ENCODE measurements at regions of chr18 and their contacts with region 1.

Region 1: GRCh38 chr18:31819106-31819924 is 58.6 kb upstream of the SLC25A52 start:
- DNase-seq: no peak
- ATAC-seq: peak in 3 of 8 donors; percentile 44 to 69 (median 46)
- H3K4me3 ChIP-seq: no peak overlapping the region
- H3K27ac ChIP-seq: no peak overlapping the region
- H3K4me1 ChIP-seq: peaks cover 0 to 9% (median 0%) of the 10 kb centered on the region in 9 donors
- H3K27me3 ChIP-seq: no peaks in the 10 kb centered on the region
- CTCF ChIP-seq: peak; percentile 34 to 78 (median 73)

Region 2: GRCh38 chr18:31746396-31746795 is 72.9 kb before region 1 on chr18:
- intact Hi-C with region 1: loop called in 6 of 10 experiments (anchors 2 to 5 kb)
- DNase-seq: no peak
- ATAC-seq: no peak
- H3K4me3 ChIP-seq: no peak overlapping the region
- H3K27ac ChIP-seq: no peak overlapping the region
- H3K4me1 ChIP-seq: no peaks in the 10 kb centered on the region
- H3K27me3 ChIP-seq: no peaks in the 10 kb centered on the region
- CTCF ChIP-seq: no peak